ENCODE measurements at regions of chr5 and their contacts with region 1.

Region 1: DNA sequence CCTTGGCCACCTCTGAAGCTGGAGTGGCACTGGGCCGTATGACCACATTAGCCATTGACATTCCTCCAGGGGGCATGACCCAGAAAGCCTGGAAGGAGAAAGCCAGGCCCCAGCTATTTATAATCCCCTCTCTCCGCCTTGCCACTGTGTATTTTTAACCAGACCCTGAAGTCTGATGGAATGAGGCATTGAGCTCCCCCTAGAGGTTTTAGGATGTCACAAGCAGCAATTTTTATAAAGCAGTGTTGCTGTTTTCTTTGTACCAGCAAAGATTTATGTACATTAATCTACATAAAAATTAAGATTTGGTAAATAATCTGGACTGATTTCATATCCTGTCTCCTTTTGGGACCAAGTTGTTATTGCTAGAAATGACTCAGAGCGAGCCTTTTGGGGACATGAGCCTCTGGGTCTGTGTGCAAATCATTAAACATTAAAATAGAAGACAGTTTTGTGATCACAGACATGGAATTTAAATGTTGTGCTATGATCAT is 127.1 kb downstream of the TRIO start:
- DNase-seq: peak; percentile 57 to 73
- H3K4me3 ChIP-seq: no peak overlapping the region
- H3K4me3 Mint-ChIP-seq: no peak overlapping the region
- H3K27ac Mint-ChIP-seq: no peak overlapping the region
- H3K4me1 ChIP-seq: peaks cover 51% of the 10 kb centered on the region
- H3K4me1 Mint-ChIP-seq: peaks cover 53% of the 10 kb centered on the region
- H3K27me3 ChIP-seq: no peaks in the 10 kb centered on the region
- H3K27me3 Mint-ChIP-seq: no peaks in the 10 kb centered on the region
- CTCF ChIP-seq: peak; percentile 73 to 83

Region 2: GRCh38 chr5:14108170-14108996 is 161.9 kb before region 1 on chr5:
- CTCF ChIA-PET with region 1: interaction called, 7 read pairs
- POLR2A ChIA-PET with region 1: no interaction called
- intact Hi-C with region 1: loop called (anchors 1 kb)
- DNase-seq: peak; percentile 57 to 62
- H3K4me3 ChIP-seq: no peak overlapping the region
- H3K4me3 Mint-ChIP-seq: no peak overlapping the region
- H3K27ac Mint-ChIP-seq: no peak overlapping the region
- H3K4me1 ChIP-seq: no peaks in the 10 kb centered on the region
- H3K4me1 Mint-ChIP-seq: no peaks in the 10 kb centered on the region
- H3K27me3 ChIP-seq: no peaks in the 10 kb centered on the region
- H3K27me3 Mint-ChIP-seq: no peaks in the 10 kb centered on the region
- CTCF ChIP-seq: peak; percentile 67 to 81

Measured in Caco-2 (cell line).